Colonic mucosa (tissue), 4 donors: ENCODE measurements at regions of chr4 and their contacts with region 1.

Region 1: DNA sequence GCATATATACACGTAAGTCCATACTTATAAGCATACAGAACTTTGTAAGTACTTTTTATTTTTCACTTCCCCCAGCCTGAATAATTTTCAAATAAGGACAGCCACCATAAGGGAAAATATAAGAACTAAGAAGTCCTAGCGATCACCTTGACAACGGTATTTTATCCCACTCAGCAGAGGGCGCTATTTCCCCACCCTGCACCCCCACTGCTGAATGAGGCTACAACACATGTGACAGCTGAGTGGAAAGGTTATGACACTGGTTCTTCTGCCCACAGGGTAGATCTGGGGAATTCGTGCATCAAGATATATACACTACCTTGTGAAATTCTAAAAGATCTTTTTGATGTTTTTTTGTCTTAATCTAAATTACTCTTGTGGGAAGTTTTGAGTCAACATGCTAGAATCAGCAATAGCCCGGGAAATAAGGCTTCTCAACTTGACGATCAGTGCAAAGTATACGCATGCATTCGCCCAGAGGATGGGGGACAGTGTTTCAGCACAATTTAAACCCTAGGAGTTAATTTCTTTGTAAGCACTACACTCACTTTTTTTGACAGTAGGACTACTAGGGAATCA is 151.5 kb downstream of the CORIN start:
- DNase-seq: peak; percentile 59
- H3K4me3 ChIP-seq: no peak overlapping the region
- H3K27ac ChIP-seq: no peak overlapping the region
- H3K4me1 ChIP-seq: no peaks in the 10 kb centered on the region
- H3K27me3 ChIP-seq: no peaks in the 10 kb centered on the region
- CTCF ChIP-seq: peak; percentile 59

Region 2: DNA sequence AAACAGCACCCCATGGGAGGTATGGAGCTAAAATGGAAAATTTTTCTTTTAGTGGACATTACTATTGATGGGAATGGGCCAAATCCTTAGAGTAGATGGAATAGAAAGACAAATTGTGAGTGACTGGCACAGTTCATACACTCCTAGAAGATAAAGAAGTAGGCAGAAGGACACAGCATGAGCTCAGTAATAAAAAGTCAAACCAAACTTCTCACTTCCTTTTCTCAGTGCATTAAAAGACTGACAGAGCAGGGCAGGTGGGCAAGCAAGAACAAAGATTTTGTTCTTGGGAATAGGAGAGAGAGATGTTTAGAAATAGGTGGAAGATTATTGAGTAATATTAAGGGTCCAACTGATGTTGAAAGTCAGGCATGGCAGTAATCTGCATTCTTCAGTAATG is 68.8 kb before region 1 on chr4:
- intact Hi-C with region 1: no loop called
- DNase-seq: no peak
- H3K4me3 ChIP-seq: no peak overlapping the region
- H3K27ac ChIP-seq: no peak overlapping the region
- H3K4me1 ChIP-seq: no peaks in the 10 kb centered on the region
- H3K27me3 ChIP-seq: no peaks in the 10 kb centered on the region
- CTCF ChIP-seq: no peak

Region 3: GRCh38 chr4:47836641-47837093 is 150.3 kb after region 1 on chr4:
- intact Hi-C with region 1: loop called (anchors 10 kb)
- DNase-seq: peak; percentile 77
- H3K4me3 ChIP-seq: peak overlapping the region; percentile 53
- H3K27ac ChIP-seq: no peak overlapping the region
- H3K4me1 ChIP-seq: no peaks in the 10 kb centered on the region
- H3K27me3 ChIP-seq: no peaks in the 10 kb centered on the region
- CTCF ChIP-seq: peak; percentile 57

Region 4: GRCh38 chr4:47933840-47934239 is 247.5 kb after region 1 on chr4:
- intact Hi-C with region 1: loop called (anchors 2 kb)
- DNase-seq: no peak
- H3K4me3 ChIP-seq: no peak overlapping the region
- H3K27ac ChIP-seq: no peak overlapping the region
- H3K4me1 ChIP-seq: no peaks in the 10 kb centered on the region
- H3K27me3 ChIP-seq: no peaks in the 10 kb centered on the region
- CTCF ChIP-seq: peak; percentile 48

Region 5: DNA sequence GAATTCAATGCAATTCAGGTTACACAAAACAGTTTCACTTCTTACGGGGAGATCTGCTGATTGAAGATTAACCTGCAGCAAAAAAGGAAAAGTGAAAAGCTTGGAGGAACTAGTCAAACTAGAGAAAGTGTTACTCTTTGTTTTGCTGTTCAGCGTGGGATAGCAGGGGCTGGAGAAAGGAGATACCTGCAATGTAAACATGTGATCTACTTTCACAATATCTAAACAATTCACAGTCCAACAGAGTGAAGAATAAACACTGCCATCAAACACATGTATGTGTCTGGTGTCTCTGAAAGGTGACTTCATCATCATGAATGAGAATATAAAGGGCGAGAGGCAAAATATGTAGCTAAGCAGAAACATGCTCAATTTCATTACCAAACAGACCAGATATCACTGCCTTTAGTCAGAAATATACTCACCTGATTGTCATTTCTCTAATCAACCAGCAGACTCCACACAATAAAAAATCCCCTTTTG is 356.6 kb after region 1 on chr4:
- intact Hi-C with region 1: no loop called
- DNase-seq: no peak
- H3K4me3 ChIP-seq: no peak overlapping the region
- H3K27ac ChIP-seq: no peak overlapping the region
- H3K4me1 ChIP-seq: peaks cover 6% of the 10 kb centered on the region
- H3K27me3 ChIP-seq: no peaks in the 10 kb centered on the region
- CTCF ChIP-seq: no peak

Region 6: GRCh38 chr4:48079972-48080391 is 393.6 kb after region 1 on chr4:
- intact Hi-C with region 1: loop called (anchors 10 kb)
- DNase-seq: no peak
- H3K4me3 ChIP-seq: no peak overlapping the region
- H3K27ac ChIP-seq: no peak overlapping the region
- H3K4me1 ChIP-seq: no peaks in the 10 kb centered on the region
- H3K27me3 ChIP-seq: no peaks in the 10 kb centered on the region
- CTCF ChIP-seq: no peak